Activated CD8-positive, alpha-beta T cell treated with anti-CD3 and anti-CD28 coated beads, Interleukin-2, amount 10 ng/mL, durations not matched to agents 7 days and 5 days (primary cell): ENCODE measurements at regions of chr11 and their contacts with region 1.

Region 1: GRCh38 chr11:10857709-10858438 is at the start of gene ZBED5:
- DNase-seq: peak; percentile 96
- ATAC-seq: peak; percentile 92
- H3K4me3 Mint-ChIP-seq: peak within 1 kb of the TSS; percentile 99
- H3K27ac Mint-ChIP-seq: peak within 1 kb of the TSS; percentile 99
- H3K4me1 Mint-ChIP-seq: peaks cover 38% of the 10 kb centered on the region
- H3K27me3 Mint-ChIP-seq: no peaks in the 10 kb centered on the region
- total RNA-seq, gene ZBED5: 33.7 to 35.6 TPM

Region 2: DNA sequence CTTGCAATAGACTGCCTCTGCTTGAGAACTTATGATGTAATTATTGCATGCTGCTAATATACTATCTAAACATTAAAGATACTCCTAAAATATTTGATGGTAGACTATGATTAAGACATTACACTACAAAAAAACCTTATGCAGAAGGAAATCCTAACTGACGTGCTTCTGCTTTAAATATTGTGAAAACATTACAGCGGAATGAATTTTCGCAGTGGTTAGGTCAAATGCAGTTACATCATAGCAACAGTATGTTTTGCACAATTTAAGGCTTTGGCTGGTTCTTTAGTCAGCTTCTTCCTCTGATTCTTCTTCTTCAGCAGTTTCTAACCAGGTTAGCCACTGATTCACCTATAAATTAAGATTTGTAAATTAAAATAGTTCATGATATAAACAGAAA is 60.3 kb before region 1 on chr11:
- CTCF ChIA-PET with region 1: interaction called, 21 read pairs
- POLR2A ChIA-PET with region 1: interaction called, 11 read pairs
- DNase-seq: no peak
- ATAC-seq: no peak
- H3K4me3 Mint-ChIP-seq: no peak overlapping the region
- H3K27ac Mint-ChIP-seq: no peak overlapping the region
- H3K4me1 Mint-ChIP-seq: peaks cover 80% of the 10 kb centered on the region
- H3K27me3 Mint-ChIP-seq: peaks cover 5% of the 10 kb centered on the region

Region 3: GRCh38 chr11:10878408-10879214 is 20.7 kb after region 1 on chr11:
- CTCF ChIA-PET with region 1: interaction called, 12 read pairs
- POLR2A ChIA-PET with region 1: interaction called, 6 read pairs
- DNase-seq: peak; percentile 40
- ATAC-seq: no peak
- H3K4me3 Mint-ChIP-seq: no peak overlapping the region
- H3K27ac Mint-ChIP-seq: peak overlapping the region; percentile 46
- H3K4me1 Mint-ChIP-seq: peaks cover 12% of the 10 kb centered on the region
- H3K27me3 Mint-ChIP-seq: no peaks in the 10 kb centered on the region

Region 4: DNA sequence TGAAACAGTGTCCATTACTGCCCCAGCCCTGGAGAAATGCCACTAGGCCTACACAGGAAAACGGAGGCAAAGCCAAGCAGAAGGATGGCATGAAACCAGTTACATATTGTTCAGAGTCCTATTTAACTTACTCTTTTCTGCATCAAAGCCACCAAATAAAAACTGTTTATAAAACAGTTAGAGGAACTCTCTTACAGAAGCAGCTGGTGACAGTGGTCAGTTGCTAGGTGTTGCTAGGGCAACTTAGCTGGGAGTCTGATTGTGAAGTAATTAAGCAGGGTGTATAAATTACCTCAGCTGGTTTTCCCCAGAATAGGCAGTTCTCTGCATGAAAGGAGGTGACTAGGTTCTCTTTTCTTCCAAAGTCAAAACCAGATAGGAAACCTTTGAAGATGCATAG is 115.5 kb after region 1 on chr11:
- CTCF ChIA-PET with region 1: no interaction called
- POLR2A ChIA-PET with region 1: no interaction called
- DNase-seq: no peak
- ATAC-seq: no peak
- H3K4me3 Mint-ChIP-seq: no peak overlapping the region
- H3K27ac Mint-ChIP-seq: no peak overlapping the region
- H3K4me1 Mint-ChIP-seq: no peaks in the 10 kb centered on the region
- H3K27me3 Mint-ChIP-seq: peaks cover 9% of the 10 kb centered on the region